Lower leg skin (tissue), 4 donors: ENCODE measurements at regions of chr5 and their contacts with region 1.

Region 1: DNA sequence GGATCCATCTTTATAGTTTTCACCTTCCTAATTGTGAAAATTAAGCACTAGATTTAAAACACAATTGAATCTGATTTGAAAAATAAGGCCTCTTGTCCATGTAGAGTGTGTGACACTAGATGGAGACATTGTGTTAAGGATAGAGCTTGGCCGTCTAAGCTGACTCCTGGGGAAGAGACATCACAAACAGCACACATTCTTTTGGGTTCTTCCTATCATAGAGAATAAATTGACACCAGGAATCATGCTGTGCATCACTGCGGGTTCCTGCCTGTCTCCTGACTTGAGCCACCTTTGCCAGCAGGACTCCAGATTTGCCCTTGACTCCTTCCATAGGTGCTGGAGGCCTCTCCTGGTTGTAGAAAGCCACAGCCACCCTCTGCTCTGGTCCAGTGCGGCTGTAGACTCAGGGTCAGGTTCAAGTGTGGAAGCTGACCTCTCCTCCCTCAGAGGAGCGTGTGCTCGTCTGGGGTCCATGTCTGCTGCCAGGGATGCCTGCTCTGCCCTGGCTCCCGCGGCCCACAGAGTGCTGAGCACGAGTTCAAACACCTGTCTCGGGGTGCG is 11.2 kb downstream of the ROPN1L start:
- DNase-seq: no peak
- H3K4me3 ChIP-seq: no peak overlapping the region
- CTCF ChIP-seq: no peak
- POLR2A ChIP-seq: no peak

Region 2: GRCh38 chr5:10485142-10485795 is 32.4 kb after region 1 on chr5:
- intact Hi-C with region 1: no loop called
- DNase-seq: no peak
- H3K4me3 ChIP-seq: no peak overlapping the region
- CTCF ChIP-seq: no peak
- POLR2A ChIP-seq: no peak

Region 3: DNA sequence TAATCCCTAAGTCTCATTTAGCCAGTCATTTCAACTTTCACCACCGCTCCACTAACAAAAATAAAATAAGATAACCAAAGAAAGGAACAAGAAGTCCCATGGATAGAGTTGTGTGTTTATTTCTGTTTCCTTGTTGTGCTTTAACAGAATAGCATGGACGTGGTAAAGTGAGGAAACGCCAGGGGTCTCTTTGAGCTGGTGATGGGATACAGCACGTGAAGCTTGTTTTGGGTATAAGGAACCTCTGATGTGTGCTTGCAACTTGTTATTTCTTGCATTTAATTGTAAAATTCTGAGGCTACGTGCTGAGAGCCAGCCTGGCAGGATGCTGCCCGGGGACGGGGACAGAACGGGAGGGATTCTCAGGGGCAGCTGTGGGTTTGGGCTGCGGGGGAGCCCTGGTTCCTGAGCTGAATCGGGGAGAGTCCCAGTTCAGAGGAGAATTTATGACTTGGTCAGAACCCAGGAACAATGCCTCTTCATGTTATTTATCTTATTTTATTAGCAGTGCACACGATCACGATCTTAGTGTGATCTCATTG is 174.4 kb after region 1 on chr5:
- intact Hi-C with region 1: loop called (anchors 5 kb)
- DNase-seq: peak in 1 of 2 donors; percentile 84
- H3K4me3 ChIP-seq: no peak overlapping the region
- CTCF ChIP-seq: no peak
- POLR2A ChIP-seq: no peak